PC-3 (cell line): ENCODE measurements at regions of chr1 and their contacts with region 1.

Region 1: GRCh38 chr1:78831731-78832360 is 174.7 kb downstream of the ADGRL4 start:
- DNase-seq: peak; percentile 95
- ATAC-seq: peak; percentile 84
- H3K4me3 ChIP-seq: no peak overlapping the region
- H3K27ac ChIP-seq: peak overlapping the region; percentile 87
- H3K4me1 ChIP-seq: peaks cover 40% of the 10 kb centered on the region
- H3K27me3 ChIP-seq: no peaks in the 10 kb centered on the region
- CTCF ChIP-seq: no peak

Region 2: GRCh38 chr1:78617615-78618026 is 214.2 kb before region 1 on chr1:
- CTCF ChIA-PET with region 1: no interaction called
- POLR2A ChIA-PET with region 1: interaction called, 5 read pairs
- intact Hi-C with region 1: loop called (anchors 2 kb)
- DNase-seq: peak; percentile 91
- ATAC-seq: peak; percentile 59
- H3K4me3 ChIP-seq: no peak overlapping the region
- H3K27ac ChIP-seq: no peak overlapping the region
- H3K4me1 ChIP-seq: peaks cover 24% of the 10 kb centered on the region
- H3K27me3 ChIP-seq: no peaks in the 10 kb centered on the region
- CTCF ChIP-seq: peak; percentile 90

Region 3: GRCh38 chr1:78688701-78689100 is 143.1 kb before region 1 on chr1:
- CTCF ChIA-PET with region 1: interaction called, 5 read pairs
- POLR2A ChIA-PET with region 1: no interaction called
- intact Hi-C with region 1: loop called (anchors 1 kb)
- DNase-seq: peak; percentile 66
- ATAC-seq: peak; percentile 41
- H3K4me3 ChIP-seq: no peak overlapping the region
- H3K27ac ChIP-seq: peak overlapping the region; percentile 55
- H3K4me1 ChIP-seq: peaks cover 57% of the 10 kb centered on the region
- H3K27me3 ChIP-seq: no peaks in the 10 kb centered on the region
- CTCF ChIP-seq: peak; percentile 74